Natural killer cell (primary cell): ENCODE measurements at regions of chr14 and their contacts with region 1.

Region 1: DNA sequence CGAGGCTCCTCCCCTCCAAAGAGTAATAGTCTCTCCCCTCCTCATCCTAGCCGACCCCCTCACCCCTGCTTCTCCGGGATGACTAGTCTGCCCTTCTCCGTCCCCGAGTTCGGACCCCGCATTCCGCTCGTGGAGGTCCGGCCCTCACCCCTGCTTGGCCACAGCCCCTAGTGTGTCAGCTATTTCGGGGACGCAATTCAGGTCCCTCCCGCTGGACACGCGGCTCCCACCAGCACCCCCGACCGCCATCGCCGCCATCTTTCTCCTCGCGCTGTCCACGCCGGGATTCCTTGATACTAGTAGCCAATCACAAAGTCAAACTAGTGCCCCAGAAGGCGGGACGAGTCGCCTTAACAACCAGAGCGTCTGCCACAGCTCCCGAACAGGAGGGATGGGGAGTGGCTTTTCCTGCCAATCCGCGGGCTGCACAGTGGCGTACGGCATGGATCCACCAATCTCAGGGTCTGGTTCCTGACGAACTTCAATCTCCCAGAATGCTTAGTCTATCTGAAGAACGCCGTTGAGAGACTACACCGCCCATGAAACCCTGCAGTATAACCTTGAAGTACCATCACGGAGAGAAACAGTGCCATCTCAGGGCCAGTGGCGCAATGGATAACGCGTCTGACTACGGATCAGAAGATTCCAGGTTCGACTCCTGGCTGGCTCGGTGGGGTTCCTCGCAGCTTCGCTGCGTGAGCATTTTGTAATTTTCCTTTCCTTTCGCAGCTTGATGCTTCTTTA is at the start of gene PRMT5:
- DNase-seq: peak; percentile 93 to 99
- ATAC-seq: peak; percentile 93 to 98 (median 94)
- H3K4me3 ChIP-seq: peak within 1 kb of the TSS; percentile 89
- H3K4me3 Mint-ChIP-seq: no peak within 1 kb of the TSS
- H3K27ac ChIP-seq: peak within 1 kb of the TSS; percentile 85
- H3K27ac Mint-ChIP-seq: no peak within 1 kb of the TSS
- H3K4me1 ChIP-seq: peaks cover 18% of the 10 kb centered on the region
- H3K4me1 Mint-ChIP-seq: no peaks in the 10 kb centered on the region
- H3K27me3 ChIP-seq: no peaks in the 10 kb centered on the region
- H3K27me3 Mint-ChIP-seq: no peaks in the 10 kb centered on the region
- CTCF ChIP-seq: no peak
- total RNA-seq, gene PRMT5: 16.3 to 22.4 (median 18.5) TPM

Region 2: DNA sequence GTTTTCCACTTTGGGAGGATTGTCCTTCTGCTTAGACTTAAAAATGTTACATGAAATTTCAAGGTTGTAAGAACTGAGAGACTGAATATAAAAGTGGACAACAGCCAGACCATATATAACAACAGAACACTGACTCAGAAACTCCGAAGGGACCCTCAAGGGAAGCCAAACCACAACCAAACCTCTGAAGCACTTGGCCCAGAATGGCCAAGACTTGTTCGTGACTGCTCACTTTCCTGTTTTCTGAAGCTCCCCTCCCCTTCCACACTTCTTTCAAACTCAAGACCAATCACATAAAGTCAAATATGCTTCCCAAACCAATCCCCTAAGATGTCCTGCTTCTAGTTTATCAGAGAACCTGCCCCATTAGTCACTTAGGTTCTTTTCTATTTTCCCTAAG is 298.8 kb before region 1 on chr14:
- intact Hi-C with region 1: no loop called
- DNase-seq: no peak
- ATAC-seq: no peak
- H3K4me3 ChIP-seq: no peak overlapping the region
- H3K4me3 Mint-ChIP-seq: no peak overlapping the region
- H3K27ac ChIP-seq: no peak overlapping the region
- H3K27ac Mint-ChIP-seq: no peak overlapping the region
- H3K4me1 ChIP-seq: no peaks in the 10 kb centered on the region
- H3K4me1 Mint-ChIP-seq: no peaks in the 10 kb centered on the region
- H3K27me3 ChIP-seq: no peaks in the 10 kb centered on the region
- H3K27me3 Mint-ChIP-seq: peaks cover 7 to 42% of the 10 kb centered on the region in 2 donors
- CTCF ChIP-seq: no peak

Region 3: DNA sequence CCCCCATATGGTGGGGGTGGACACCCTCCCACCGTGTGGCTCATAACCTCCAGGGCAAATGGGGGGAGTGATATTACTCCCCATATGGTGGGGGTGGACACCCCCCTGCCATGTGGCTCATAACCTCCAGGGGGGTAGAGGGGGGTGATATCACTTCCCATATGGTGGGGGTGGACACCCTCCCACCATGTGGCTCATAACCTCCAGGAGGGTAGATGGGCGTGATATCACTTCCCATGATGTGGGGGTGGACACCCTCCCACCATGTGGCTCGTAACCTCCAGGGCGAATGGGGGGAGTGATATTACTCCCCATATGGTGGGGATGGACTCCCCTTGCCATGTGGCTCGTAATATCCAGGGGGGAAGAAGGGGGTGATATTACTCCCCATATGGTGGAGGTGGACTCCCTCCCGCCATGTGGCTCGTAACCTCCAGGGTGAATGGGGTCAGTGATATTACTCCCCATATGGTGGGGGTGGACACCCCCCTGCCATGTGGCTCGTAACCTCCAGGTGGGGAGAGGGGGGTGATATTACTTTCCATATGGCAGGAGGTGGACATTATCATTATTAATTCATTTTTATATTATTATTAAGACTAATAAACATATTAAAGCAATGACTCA is 214.0 kb before region 1 on chr14:
- intact Hi-C with region 1: no loop called
- DNase-seq: no peak
- ATAC-seq: no peak
- H3K4me3 ChIP-seq: no peak overlapping the region
- H3K4me3 Mint-ChIP-seq: no peak overlapping the region
- H3K27ac ChIP-seq: no peak overlapping the region
- H3K27ac Mint-ChIP-seq: no peak overlapping the region
- H3K4me1 ChIP-seq: peaks cover 5% of the 10 kb centered on the region
- H3K4me1 Mint-ChIP-seq: peaks cover 6 to 12% of the 10 kb centered on the region in 2 donors
- H3K27me3 ChIP-seq: peaks cover 20% of the 10 kb centered on the region
- H3K27me3 Mint-ChIP-seq: peaks cover 32% of the 10 kb centered on the region in 2 donors
- CTCF ChIP-seq: no peak

Region 4: DNA sequence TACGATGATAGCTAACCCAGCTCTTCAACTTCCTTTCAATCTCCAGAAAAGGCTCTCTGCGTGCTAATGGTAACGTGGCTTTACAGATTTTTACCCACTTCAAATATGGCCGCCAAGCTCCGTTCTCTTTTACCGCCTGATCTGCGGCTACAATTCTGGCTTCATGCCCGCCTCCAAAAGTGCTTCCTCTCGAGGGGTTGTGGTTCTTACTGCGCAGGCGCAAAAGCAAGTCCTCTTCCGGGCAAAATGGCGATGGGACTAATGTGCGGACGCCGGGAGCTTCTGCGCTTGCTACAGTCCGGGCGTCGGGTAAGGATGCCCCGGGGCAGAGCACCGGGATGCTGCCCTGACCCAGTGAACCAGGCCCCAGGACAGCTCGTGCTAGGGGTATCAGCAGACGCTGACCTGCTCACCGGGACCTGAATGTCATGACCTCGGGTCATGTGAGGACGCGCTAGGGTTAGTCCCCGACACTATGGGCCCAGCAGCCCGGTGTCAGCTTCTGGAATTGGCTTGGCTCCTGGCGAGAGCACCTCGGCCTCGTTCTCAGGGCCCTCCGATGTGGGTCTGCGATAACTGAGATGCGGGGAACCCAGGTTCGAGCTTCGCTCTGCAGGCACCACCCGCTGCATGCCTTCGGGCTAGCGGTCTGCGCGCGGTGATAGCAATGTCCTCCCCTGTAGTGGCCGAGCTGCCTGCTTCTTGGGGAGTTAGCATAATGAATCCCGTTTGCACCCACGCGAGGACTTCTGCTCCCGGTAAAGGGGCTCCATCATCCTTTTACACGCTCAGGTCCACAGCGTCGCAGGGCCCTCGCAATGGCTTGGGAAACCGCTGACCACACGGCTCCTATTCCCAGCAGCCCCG is 162.6 kb before region 1 on chr14 and contains the start of gene OXA1L:
- intact Hi-C with region 1: loop called (anchors 1 kb)
- DNase-seq: peak; percentile 90 to 99
- ATAC-seq: peak; percentile 92 to 95 (median 95)
- H3K4me3 ChIP-seq: peak within 1 kb of the TSS; percentile 86
- H3K4me3 Mint-ChIP-seq: peak within 1 kb of the TSS; percentile 92
- H3K27ac ChIP-seq: peak within 1 kb of the TSS; percentile 79
- H3K27ac Mint-ChIP-seq: peak within 1 kb of the TSS; percentile 93 to 94
- H3K4me1 ChIP-seq: peaks cover 14% of the 10 kb centered on the region
- H3K4me1 Mint-ChIP-seq: peaks cover 35 to 36% of the 10 kb centered on the region in 2 donors
- H3K27me3 ChIP-seq: no peaks in the 10 kb centered on the region
- H3K27me3 Mint-ChIP-seq: no peaks in the 10 kb centered on the region
- CTCF ChIP-seq: no peak
- total RNA-seq, gene OXA1L: 121 to 143 (median 125) TPM

Region 5: GRCh38 chr14:22955702-22956569 is 26.7 kb after region 1 on chr14:
- intact Hi-C with region 1: loop called (anchors 1 kb)
- DNase-seq: no peak
- ATAC-seq: no peak
- H3K4me3 ChIP-seq: peak overlapping the region; percentile 72
- H3K4me3 Mint-ChIP-seq: peak overlapping the region; percentile 92
- H3K27ac ChIP-seq: peak overlapping the region; percentile 80
- H3K27ac Mint-ChIP-seq: peak overlapping the region; percentile 82 to 95
- H3K4me1 ChIP-seq: peaks cover 18% of the 10 kb centered on the region
- H3K4me1 Mint-ChIP-seq: peaks cover 16 to 17% of the 10 kb centered on the region in 2 donors
- H3K27me3 ChIP-seq: no peaks in the 10 kb centered on the region
- H3K27me3 Mint-ChIP-seq: no peaks in the 10 kb centered on the region
- CTCF ChIP-seq: no peak

Region 6: DNA sequence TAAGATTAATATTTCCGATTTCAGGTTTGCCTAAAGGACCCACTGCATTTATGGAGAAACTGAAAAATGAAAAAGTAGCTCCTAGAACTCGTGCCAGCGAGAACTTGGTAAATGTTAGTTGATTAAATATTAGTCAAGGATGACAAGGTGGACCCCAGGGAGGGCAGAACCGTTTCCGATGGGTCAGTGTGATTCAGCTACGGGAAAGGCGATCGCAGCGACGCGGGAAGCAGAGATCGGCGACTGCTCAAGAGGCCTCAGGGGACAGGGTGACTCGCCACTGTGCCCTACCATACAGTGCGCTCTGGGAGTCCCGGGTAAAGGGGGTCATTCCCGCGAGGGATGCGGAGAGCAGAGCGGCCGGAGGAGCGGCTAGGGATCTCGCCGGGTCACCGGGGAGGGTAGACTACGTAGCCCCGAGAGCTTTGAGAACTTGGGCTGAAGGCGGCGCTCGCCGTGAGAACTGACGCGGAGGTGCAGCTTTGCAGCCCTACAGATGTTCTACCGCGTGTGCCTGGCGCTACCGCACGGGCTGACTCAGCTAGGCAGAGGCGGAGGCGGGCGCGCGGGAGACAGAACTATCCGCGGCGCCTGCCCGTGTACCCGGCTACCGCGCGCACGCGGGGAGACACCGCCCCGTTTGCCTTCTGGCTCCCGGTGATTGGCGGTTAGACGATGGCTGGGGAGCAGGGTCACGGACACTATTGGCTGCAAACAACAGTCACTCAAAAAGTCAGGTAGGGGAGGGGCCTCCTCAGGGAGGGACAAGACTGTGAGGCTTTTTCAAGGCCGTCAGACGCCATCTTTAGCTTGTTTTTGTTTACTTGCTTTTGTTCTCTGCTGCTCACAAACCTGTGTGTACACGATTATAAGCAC is 77.5 kb after region 1 on chr14:
- intact Hi-C with region 1: loop called (anchors 2 kb)
- DNase-seq: peak; percentile 95 to 99
- ATAC-seq: peak; percentile 91 to 99 (median 93)
- H3K4me3 ChIP-seq: peak overlapping the region; percentile 93
- H3K4me3 Mint-ChIP-seq: peak overlapping the region; percentile 98
- H3K27ac ChIP-seq: peak overlapping the region; percentile 91
- H3K27ac Mint-ChIP-seq: peak overlapping the region; percentile 97 to 98
- H3K4me1 ChIP-seq: peaks cover 23% of the 10 kb centered on the region
- H3K4me1 Mint-ChIP-seq: peaks cover 30 to 38% of the 10 kb centered on the region in 2 donors
- H3K27me3 ChIP-seq: no peaks in the 10 kb centered on the region
- H3K27me3 Mint-ChIP-seq: no peaks in the 10 kb centered on the region
- CTCF ChIP-seq: peak; percentile 18

Region 7: GRCh38 chr14:23057757-23058653 is 128.7 kb after region 1 on chr14:
- intact Hi-C with region 1: loop called (anchors 1 kb)
- DNase-seq: peak; percentile 86 to 94
- ATAC-seq: peak; percentile 72 to 83 (median 73)
- H3K4me3 ChIP-seq: peak overlapping the region; percentile 58
- H3K4me3 Mint-ChIP-seq: peak overlapping the region; percentile 82
- H3K27ac ChIP-seq: no peak overlapping the region
- H3K27ac Mint-ChIP-seq: peak overlapping the region; percentile 60 to 74
- H3K4me1 ChIP-seq: peaks cover 18% of the 10 kb centered on the region
- H3K4me1 Mint-ChIP-seq: peaks cover 17 to 27% of the 10 kb centered on the region in 2 donors
- H3K27me3 ChIP-seq: no peaks in the 10 kb centered on the region
- H3K27me3 Mint-ChIP-seq: peaks cover 0 to 3% of the 10 kb centered on the region in 2 donors
- CTCF ChIP-seq: peak; percentile 98